ENCODE measurements at regions of chr9 and their contacts with region 1.

Region 1: DNA sequence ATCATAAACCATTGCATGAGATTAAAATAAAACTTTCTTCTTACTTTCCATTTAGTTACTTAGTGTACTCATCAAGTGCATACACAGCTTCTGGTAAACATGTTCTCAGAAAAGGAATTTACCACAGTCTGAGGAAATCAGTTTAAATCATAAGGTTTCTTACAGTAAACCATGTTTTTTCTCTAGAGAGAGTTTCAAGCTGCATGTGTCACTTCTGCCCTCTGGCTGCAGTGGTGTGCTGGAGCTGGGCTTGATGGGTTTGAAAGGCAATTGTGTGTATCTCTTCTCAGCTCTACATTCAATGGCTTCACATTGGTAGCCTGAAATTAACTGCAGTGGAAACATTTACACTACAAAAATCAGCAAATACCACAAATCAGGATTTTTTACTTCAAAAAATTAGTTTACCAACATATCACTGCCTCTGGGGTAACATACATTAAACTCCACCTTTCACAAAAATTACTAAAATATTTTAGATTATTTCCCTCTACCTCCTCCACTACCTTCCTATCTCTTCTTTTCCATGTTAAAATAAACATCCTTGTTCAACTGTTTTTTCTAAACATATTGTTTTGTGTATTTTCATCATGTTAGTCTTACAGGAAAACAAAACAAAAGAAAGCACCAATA is 414.3 kb downstream of the ANXA1 start:
- DNase-seq: peak; percentile 46
- ATAC-seq: peak; percentile 91
- H3K4me3 ChIP-seq: no peak overlapping the region
- H3K27ac ChIP-seq: no peak overlapping the region
- H3K4me1 ChIP-seq: peaks cover 9% of the 10 kb centered on the region; the same call in 1 of the 2 replicates
- H3K27me3 ChIP-seq: no peaks in the 10 kb centered on the region
- CTCF ChIP-seq: peak; percentile 86
- EP300 ChIP-seq: no peak
- POLR2A ChIP-seq: no peak
- RAD21 ChIP-seq: peak; percentile 77

Region 2: DNA sequence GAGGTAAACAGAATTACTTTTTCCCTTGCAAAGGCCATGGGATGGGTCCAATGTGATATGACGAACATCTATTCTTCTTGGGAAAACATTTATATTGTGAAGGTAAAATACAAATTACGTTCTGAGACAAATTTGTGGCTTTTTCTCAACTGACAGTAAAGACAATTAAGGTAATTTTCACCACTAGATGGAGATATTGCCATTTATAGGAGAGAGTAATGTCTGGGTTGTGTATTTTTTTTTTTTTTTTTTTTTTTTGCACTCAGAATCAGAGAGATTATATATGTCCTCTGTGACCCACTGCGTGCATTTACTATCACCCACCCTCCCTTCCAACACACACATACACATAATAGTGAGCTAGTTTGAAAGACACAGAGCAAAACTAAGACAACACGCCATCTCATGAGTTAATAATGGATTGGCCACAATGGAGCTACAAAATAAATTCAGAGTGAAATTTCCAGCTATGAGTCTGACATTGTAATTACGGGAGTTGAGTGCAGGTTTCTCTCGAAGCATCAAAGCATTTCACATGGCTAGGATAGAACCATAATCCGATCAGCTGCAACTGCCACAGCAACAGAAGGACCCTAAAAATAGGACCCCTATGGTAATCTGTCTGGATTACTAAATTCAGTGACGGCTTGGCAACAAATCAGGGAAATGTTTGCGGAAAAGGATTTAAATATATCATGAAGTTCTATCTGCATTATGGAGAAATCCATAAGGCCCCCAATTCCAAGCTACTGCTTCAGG is 365.1 kb before region 1 on chr9:
- CTCF ChIA-PET with region 1: interaction called, 18 read pairs
- POLR2A ChIA-PET with region 1: no interaction called
- in situ Hi-C with region 1: loop called (anchors 10 kb)
- intact Hi-C with region 1: loop called (anchors 1 kb)
- DNase-seq: peak; percentile 33
- ATAC-seq: peak; percentile 57
- H3K4me3 ChIP-seq: no peak overlapping the region
- H3K27ac ChIP-seq: no peak overlapping the region
- H3K4me1 ChIP-seq: no peaks in the 10 kb centered on the region
- H3K27me3 ChIP-seq: no peaks in the 10 kb centered on the region
- CTCF ChIP-seq: peak; percentile 54
- EP300 ChIP-seq: no peak
- POLR2A ChIP-seq: no peak
- RAD21 ChIP-seq: no peak

Region 3: GRCh38 chr9:73269430-73270101 is 296.4 kb before region 1 on chr9:
- CTCF ChIA-PET with region 1: interaction called, 12 read pairs
- POLR2A ChIA-PET with region 1: no interaction called
- in situ Hi-C with region 1: loop called (anchors 10 kb)
- intact Hi-C with region 1: loop called (anchors 1 kb)
- DNase-seq: peak; percentile 44
- ATAC-seq: peak; percentile 77
- H3K4me3 ChIP-seq: no peak overlapping the region
- H3K27ac ChIP-seq: no peak overlapping the region
- H3K4me1 ChIP-seq: peaks cover 10% of the 10 kb centered on the region; the same call in 1 of the 2 replicates
- H3K27me3 ChIP-seq: no peaks in the 10 kb centered on the region
- CTCF ChIP-seq: peak; percentile 58
- EP300 ChIP-seq: no peak
- POLR2A ChIP-seq: no peak
- RAD21 ChIP-seq: no peak

Region 4: GRCh38 chr9:73357607-73358006 is 208.3 kb before region 1 on chr9:
- CTCF ChIA-PET with region 1: no interaction called
- POLR2A ChIA-PET with region 1: no interaction called
- in situ Hi-C with region 1: no loop called
- intact Hi-C with region 1: loop called (anchors 10 kb)
- DNase-seq: no peak
- ATAC-seq: no peak
- H3K4me3 ChIP-seq: no peak overlapping the region
- H3K27ac ChIP-seq: no peak overlapping the region
- H3K4me1 ChIP-seq: no peaks in the 10 kb centered on the region
- H3K27me3 ChIP-seq: no peaks in the 10 kb centered on the region
- CTCF ChIP-seq: no peak
- EP300 ChIP-seq: no peak
- POLR2A ChIP-seq: no peak
- RAD21 ChIP-seq: no peak

Region 5: GRCh38 chr9:73441890-73442818 is 123.8 kb before region 1 on chr9:
- CTCF ChIA-PET with region 1: no interaction called
- POLR2A ChIA-PET with region 1: no interaction called
- in situ Hi-C with region 1: no loop called
- intact Hi-C with region 1: loop called (anchors 5 kb)
- DNase-seq: no peak
- ATAC-seq: no peak
- H3K4me3 ChIP-seq: no peak overlapping the region
- H3K27ac ChIP-seq: no peak overlapping the region
- H3K4me1 ChIP-seq: peaks cover 11% of the 10 kb centered on the region; the same call in 1 of the 2 replicates
- H3K27me3 ChIP-seq: no peaks in the 10 kb centered on the region
- CTCF ChIP-seq: no peak
- EP300 ChIP-seq: no peak
- POLR2A ChIP-seq: no peak
- RAD21 ChIP-seq: no peak

Region 6: DNA sequence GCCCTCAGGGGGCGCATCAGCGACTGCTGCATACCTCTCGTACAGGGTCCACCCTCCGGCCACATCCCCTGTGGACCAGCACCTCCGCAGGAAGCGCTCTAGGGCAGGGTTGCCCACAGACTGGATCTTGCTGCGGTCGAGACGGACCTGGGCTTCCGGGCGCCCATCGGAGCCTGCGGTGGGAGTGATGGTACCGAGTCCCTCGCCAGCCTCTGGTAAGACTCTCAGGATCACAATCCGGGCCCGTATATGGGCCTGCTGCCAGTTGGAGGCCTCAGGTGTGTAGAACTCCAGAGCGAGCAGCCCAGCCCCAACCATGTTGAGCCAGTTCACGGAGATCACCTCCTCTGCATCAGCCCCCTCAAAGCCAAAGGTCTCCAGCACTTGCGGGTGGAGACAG is 91.3 kb before region 1 on chr9:
- CTCF ChIA-PET with region 1: no interaction called
- POLR2A ChIA-PET with region 1: no interaction called
- in situ Hi-C with region 1: no loop called
- intact Hi-C with region 1: loop called (anchors 10 kb)
- DNase-seq: no peak
- ATAC-seq: no peak
- H3K4me3 ChIP-seq: no peak overlapping the region
- H3K27ac ChIP-seq: no peak overlapping the region
- H3K4me1 ChIP-seq: no peaks in the 10 kb centered on the region
- H3K27me3 ChIP-seq: no peaks in the 10 kb centered on the region
- CTCF ChIP-seq: no peak
- EP300 ChIP-seq: no peak
- POLR2A ChIP-seq: no peak
- RAD21 ChIP-seq: no peak

Measured in HepG2 (cell line).